OCI-LY7 (cell line): ENCODE measurements at regions of chr19 and their contacts with region 1.

Region 1: GRCh38 chr19:4803736-4804695 is 12.5 kb downstream of the FEM1A start:
- DNase-seq: peak; percentile 85
- H3K4me3 ChIP-seq: no peak overlapping the region
- H3K27ac ChIP-seq: no peak overlapping the region
- H3K4me1 ChIP-seq: peaks cover 15% of the 10 kb centered on the region
- CTCF ChIP-seq: peak; percentile 92

Region 2: DNA sequence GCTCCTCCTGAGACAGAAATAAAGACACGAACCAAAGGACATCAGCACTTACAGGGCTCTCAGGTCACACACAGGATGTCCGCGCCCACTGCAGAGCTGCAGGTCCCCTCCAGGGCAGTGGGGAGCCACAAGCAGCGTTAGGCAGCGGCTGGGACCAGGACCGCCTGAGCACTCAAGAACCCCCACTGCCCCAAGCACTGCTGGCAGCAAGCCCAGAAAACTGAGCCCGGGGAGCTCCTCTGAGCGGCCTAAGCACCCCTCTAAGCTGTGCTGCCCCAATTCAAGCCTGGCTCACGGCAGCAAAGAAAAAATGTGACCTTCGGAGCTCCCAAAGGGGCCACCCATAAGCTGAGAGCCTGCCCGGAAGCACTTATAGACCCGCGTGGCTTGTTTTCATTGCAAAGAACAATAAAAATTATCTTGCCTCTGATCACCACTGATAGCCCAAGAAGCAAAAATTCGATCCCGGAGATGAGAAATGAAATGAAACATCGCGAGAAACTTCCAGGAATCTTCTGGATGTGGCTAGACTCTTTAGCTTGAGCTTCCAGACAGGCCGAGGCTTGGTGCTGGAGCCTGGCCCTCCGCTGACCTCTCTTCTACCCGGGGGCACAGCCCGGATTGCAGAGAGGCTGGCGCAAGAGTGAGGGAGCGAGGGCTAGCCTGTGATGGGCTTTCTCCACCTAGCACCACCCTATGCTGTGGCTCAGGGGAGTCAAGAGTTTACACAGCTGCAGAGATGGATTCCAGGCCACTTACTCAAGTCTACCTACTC is 86.6 kb before region 1 on chr19:
- CTCF ChIA-PET with region 1: no interaction called
- POLR2A ChIA-PET with region 1: no interaction called
- intact Hi-C with region 1: no loop called
- DNase-seq: no peak
- H3K4me3 ChIP-seq: no peak overlapping the region
- H3K27ac ChIP-seq: no peak overlapping the region
- H3K4me1 ChIP-seq: peaks cover 8% of the 10 kb centered on the region
- CTCF ChIP-seq: no peak

Region 3: DNA sequence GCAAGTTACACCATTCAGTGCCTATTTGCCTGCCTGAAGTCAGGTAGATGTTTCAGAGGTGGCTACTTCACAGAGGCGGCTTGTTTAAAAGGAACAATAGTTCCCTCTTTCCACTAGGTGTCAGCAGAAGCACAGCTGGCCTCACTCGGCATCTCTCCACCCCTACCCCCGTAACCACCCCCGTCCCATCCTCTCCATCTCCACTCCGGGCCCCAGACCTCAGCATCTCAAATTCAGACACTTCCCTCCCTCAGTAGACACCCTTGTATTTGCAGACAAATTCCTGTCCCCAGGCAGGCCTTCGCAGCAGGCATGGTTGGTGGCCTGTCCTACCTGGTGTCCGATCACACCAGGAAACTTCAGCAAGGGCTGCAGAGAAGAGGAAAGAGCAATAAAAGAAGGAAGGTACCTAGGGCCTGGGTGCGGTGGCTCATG is 71.3 kb before region 1 on chr19:
- CTCF ChIA-PET with region 1: no interaction called
- POLR2A ChIA-PET with region 1: no interaction called
- intact Hi-C with region 1: loop called (anchors 1 kb)
- DNase-seq: peak; percentile 85
- H3K4me3 ChIP-seq: no peak overlapping the region
- H3K27ac ChIP-seq: no peak overlapping the region
- H3K4me1 ChIP-seq: peaks cover 4% of the 10 kb centered on the region
- CTCF ChIP-seq: peak; percentile 88

Region 4: GRCh38 chr19:4815426-4816201 is 11.6 kb after region 1 on chr19:
- CTCF ChIA-PET with region 1: no interaction called
- POLR2A ChIA-PET with region 1: no interaction called
- intact Hi-C with region 1: no loop called
- DNase-seq: peak; percentile 91
- H3K4me3 ChIP-seq: no peak overlapping the region
- H3K27ac ChIP-seq: no peak overlapping the region
- H3K4me1 ChIP-seq: peaks cover 24% of the 10 kb centered on the region
- CTCF ChIP-seq: no peak